H1 (cell line): ENCODE measurements at regions of chr19 and their contacts with region 1.

Region 1: DNA sequence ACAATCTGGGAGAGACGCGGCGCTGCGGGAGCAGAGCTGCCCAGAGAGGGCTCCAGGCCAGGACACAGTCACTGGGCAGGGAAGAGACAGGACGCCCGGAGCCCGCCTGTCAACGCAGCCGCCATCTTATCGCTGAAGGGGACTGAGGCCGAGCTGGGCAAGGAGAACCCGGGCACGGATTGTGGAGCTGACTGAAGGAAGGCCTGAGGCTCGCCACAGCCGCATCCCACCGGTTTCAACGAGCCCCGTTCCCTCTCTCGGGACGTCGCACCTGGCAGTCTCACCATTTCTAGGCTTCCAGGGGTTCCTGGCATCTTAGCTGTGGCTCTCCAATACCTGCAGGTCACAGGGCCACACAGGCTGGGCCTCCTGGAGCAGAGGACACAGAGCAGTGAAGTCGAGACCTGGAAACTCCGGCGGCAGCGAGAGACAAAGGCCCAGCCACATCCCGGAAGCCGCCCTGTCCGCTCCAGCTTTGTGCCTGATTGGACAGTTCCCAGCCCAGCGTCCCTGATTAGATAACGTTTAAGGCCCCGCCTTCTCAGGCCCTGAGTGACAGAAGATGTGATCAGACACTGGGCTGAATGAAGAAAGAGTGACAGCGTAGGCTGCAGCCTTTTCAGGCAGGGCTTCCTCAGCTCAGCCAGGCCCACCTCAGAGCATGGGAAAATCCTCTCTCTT is at the start of gene ZNF91:
- DNase-seq: peak; percentile 87 to 91
- H3K4me3 ChIP-seq: peak within 1 kb of the TSS; percentile 78 to 98 (median 90)
- H3K27ac ChIP-seq: peak within 1 kb of the TSS; percentile 96
- H3K4me1 ChIP-seq: peaks cover 0 to 4% (median 3%) of the 10 kb centered on the region in 4 experiments; a peak in 4 of 7 replicates
- H3K27me3 ChIP-seq: no peaks in the 10 kb centered on the region
- CTCF ChIP-seq: no peak
- EP300 ChIP-seq: no peak
- POLR2A ChIP-seq: peak; percentile 97 to 99
- RAD21 ChIP-seq: no peak
- total RNA-seq, gene ZNF91: 35.1 and 36.7 TPM in 2 replicates

Region 2: DNA sequence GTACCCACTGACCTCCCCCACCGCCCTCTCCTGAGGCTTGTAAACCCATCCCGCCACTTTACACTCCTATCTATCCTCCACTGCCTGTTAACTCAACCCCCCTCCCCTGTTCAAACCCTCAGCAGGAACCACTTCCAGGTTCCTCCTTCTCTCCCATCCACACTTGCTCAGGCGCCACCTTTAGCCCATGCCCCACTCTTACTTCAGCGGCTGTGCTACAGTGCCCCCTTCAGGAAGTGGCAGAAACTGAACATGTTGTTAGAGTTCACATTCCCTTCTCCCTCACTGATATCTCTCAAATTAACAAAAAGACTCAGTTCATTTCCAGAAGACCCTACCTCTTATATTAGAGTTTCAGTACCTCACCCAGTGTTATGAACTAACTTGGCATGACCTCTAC is 49.3 kb before region 1 on chr19:
- CTCF ChIA-PET with region 1: no interaction called
- POLR2A ChIA-PET with region 1: no interaction called
- DNase-seq: peak; percentile 27 to 48
- H3K4me3 ChIP-seq: no peak overlapping the region
- H3K27ac ChIP-seq: no peak overlapping the region
- H3K4me1 ChIP-seq: no peaks in the 10 kb centered on the region
- H3K27me3 ChIP-seq: no peaks in the 10 kb centered on the region
- CTCF ChIP-seq: peak; percentile 64 to 74 (median 68)
- EP300 ChIP-seq: no peak
- POLR2A ChIP-seq: no peak
- RAD21 ChIP-seq: peak; percentile 68 to 77

Region 3: DNA sequence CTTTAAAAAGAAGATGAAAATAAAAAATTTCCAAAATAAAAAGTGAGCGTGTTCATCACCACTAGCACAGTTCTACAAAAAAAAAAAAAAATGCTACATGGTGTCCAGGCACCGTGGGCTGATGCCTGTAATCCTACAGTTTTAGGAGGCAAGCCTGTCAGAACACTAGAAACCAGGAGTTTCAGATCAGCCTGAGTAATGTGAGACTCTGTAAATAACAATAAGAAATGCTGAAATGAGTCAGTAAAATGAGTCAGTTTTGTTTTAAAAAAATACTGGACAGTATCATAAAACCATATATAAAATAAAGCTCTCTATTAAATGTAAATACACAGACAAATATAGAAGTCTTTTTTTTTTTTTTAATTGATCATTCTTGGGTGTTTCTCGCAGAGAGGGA is 30.0 kb before region 1 on chr19:
- CTCF ChIA-PET with region 1: no interaction called
- POLR2A ChIA-PET with region 1: no interaction called
- DNase-seq: no peak
- H3K4me3 ChIP-seq: no peak overlapping the region
- H3K27ac ChIP-seq: no peak overlapping the region
- H3K4me1 ChIP-seq: no peaks in the 10 kb centered on the region
- H3K27me3 ChIP-seq: no peaks in the 10 kb centered on the region
- CTCF ChIP-seq: no peak
- EP300 ChIP-seq: no peak
- POLR2A ChIP-seq: no peak
- RAD21 ChIP-seq: no peak

Region 4: DNA sequence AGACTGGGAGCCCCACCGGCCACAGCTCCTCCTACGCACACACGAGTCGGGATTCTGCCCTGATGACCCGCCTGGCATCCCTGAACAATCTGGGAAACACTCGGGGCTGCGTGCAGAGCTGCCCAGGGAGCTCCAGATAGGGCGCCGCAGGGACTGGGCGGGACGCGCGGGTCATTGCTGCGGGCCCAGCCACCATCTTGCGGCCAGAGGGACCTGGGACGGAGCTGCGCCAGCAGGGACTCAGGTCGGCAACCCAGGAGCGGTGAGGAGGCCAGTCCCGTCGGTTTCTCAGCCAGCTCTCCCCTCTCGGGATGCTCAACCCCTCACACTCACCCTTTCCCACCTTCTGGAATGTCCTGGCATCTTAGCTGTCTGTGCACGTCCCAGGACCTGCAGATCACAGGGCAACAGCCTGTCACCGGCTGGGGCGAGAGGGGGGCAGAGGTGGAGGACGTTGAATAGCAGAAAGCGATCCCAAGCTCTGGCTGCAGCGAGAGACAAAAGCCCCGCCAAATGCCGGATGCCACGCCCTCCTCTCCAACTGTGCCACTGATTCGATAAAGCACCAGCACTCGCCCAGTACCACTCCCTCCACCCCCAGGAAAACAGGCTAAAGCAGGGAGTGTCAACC is 20.5 kb after region 1 on chr19:
- CTCF ChIA-PET with region 1: no interaction called
- POLR2A ChIA-PET with region 1: interaction called, 116 read pairs
- DNase-seq: peak; percentile 79 to 89
- H3K4me3 ChIP-seq: peak overlapping the region; percentile 59 to 97 (median 92)
- H3K27ac ChIP-seq: peak overlapping the region; percentile 90
- H3K4me1 ChIP-seq: no peaks in the 10 kb centered on the region
- H3K27me3 ChIP-seq: no peaks in the 10 kb centered on the region
- CTCF ChIP-seq: no peak
- EP300 ChIP-seq: no peak
- POLR2A ChIP-seq: peak in 1 of 2 experiments; percentile 90; a peak in 2 of 3 replicates
- RAD21 ChIP-seq: no peak